ENCODE measurements at regions of chr6 and their contacts with region 1.

Region 1: DNA sequence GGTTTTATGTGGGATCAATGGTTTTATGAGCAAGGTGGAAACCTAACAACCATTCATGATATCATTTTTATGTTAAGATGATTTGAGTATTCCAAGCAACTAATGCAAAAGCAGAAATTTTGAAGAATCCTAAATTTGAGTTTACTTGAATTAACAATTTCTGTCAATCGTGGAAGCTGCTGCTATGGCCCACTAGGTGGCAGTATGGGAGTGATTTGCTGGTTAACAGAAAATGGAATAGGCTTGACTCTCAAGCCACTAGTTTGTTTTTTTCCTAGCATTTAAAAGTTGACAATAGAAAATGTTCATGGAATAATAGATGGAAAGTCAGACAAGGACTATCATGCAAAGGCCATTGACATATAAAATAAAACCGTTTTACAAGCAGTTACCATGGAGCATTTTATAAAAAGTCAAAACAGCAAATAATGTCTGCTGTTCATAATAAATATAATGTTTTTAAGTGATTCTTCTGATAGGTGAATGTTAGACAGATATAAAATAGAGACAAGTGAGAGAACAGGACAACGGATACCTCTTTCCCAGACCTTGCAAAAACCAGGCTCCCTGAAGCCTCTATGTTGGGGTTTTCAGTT is 43.0 kb upstream of the TMEM200A start:
- DNase-seq: peak; percentile 9 to 62 (median 30)
- ATAC-seq: peak; percentile 80
- H3K4me3 ChIP-seq: no peak overlapping the region
- H3K27ac ChIP-seq: no peak overlapping the region
- H3K4me1 ChIP-seq: no peaks in the 10 kb centered on the region
- H3K27me3 ChIP-seq: no peaks in the 10 kb centered on the region
- CTCF ChIP-seq: peak; percentile 62 to 85 (median 77)
- EP300 ChIP-seq: no peak
- POLR2A ChIP-seq: no peak
- RAD21 ChIP-seq: peak; percentile 89

Region 2: DNA sequence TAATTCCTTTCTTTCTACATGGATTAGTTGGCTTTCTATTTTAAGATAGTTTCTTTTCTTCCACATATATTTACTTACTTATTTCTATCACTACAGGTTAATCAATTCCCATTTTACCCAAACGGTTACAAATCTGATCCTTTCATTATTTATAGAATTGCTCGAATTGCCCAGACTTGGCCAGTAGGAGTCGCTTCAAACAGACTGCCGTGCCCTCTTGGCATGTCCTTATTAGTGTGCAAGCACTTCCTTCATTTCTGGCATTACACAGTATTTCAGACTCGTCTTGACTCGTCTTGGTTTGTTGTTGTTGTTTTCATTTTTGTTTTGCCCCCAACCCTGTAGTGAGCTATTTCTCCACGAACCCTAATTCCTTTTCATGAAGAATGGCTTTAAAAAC is 174.6 kb before region 1 on chr6:
- CTCF ChIA-PET with region 1: no interaction called
- POLR2A ChIA-PET with region 1: no interaction called
- in situ Hi-C with region 1: no loop called
- intact Hi-C with region 1: no loop called
- DNase-seq: peak in 2 of 4 experiments; percentile 15 to 20
- ATAC-seq: peak; percentile 77; the same call in 2 of the 3 replicates
- H3K4me3 ChIP-seq: no peak overlapping the region
- H3K27ac ChIP-seq: no peak overlapping the region
- H3K4me1 ChIP-seq: no peaks in the 10 kb centered on the region; a peak in 1 of 5 replicates
- H3K27me3 ChIP-seq: no peaks in the 10 kb centered on the region; a peak in 1 of 5 replicates
- CTCF ChIP-seq: peak; percentile 48 to 60 (median 59)
- EP300 ChIP-seq: no peak
- POLR2A ChIP-seq: no peak
- RAD21 ChIP-seq: peak; percentile 24 to 50; a peak in 3 of 4 replicates

Region 3: DNA sequence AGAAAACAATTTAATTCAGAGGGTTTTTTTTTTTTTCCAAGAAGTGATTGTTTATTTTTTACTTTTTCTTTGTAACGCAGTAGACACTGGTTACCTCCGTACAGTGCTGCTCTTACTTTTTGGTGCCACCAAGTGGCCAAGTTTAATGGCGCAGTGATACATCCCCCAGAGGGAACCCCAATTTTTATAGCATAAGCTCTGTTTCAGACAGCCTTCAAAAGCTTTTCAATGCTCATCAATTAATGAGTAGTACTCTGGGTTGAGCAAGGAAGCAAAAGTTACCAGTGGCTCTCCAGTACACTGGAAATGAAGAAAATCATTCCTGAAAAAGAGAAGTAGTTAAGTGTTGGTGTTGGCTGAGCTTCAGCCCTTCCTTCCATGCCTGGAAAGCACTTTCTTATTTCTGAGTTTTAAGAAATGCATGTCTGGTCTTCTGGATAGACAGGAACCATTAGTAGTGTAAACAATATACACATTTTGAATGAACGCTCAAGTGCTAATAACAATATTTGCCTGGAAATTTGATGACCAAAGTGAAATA is 375.3 kb after region 1 on chr6:
- CTCF ChIA-PET with region 1: interaction called, 7 read pairs
- POLR2A ChIA-PET with region 1: no interaction called
- in situ Hi-C with region 1: no loop called
- intact Hi-C with region 1: loop called (anchors 2 kb)
- DNase-seq: peak; percentile 17 to 36 (median 26)
- ATAC-seq: peak; percentile 84
- H3K4me3 ChIP-seq: no peak overlapping the region
- H3K27ac ChIP-seq: no peak overlapping the region
- H3K4me1 ChIP-seq: no peaks in the 10 kb centered on the region
- H3K27me3 ChIP-seq: no peaks in the 10 kb centered on the region
- CTCF ChIP-seq: peak; percentile 35 to 57 (median 38); a peak in 3 of 6 replicates
- EP300 ChIP-seq: no peak
- POLR2A ChIP-seq: no peak
- RAD21 ChIP-seq: peak; percentile 60 to 69

Region 4: DNA sequence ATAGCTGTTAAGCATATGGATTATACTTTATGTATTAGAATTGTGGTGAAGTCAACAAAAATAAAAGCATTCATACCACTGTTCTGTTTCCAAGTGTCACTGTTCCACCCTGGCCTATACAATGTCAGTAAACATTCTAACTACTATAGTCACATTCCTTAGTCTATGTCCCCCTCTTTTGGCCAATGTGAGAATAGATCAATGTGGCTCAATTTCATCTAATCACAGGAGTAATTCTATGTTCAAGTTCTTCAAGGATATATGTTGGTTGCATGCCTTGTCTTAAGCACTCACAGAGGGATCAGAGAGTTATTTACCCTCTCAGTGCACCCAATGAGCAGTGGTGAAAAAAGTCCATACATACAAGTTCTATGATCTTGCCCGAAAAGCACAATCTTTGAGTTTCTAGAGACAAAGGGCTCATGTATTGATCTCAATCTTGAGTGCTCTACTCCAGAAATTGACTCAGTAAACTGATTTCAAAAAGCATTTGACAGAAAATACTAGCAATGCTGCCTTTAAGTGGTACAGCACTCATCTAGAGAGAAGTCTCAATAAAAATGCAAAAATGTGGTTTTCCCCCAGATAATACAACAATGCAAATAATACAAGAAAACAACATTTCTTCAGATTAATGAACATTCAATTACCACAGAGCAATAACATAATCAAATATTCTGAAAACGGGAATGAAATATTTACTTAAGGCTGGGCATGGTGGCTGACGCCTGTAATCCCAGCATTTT is 521.0 kb after region 1 on chr6:
- CTCF ChIA-PET with region 1: no interaction called
- POLR2A ChIA-PET with region 1: no interaction called
- in situ Hi-C with region 1: no loop called
- intact Hi-C with region 1: loop called (anchors 2 kb)
- DNase-seq: peak in 2 of 4 experiments; percentile 32 to 38
- ATAC-seq: peak; percentile 85
- H3K4me3 ChIP-seq: no peak overlapping the region
- H3K27ac ChIP-seq: no peak overlapping the region
- H3K4me1 ChIP-seq: no peaks in the 10 kb centered on the region
- H3K27me3 ChIP-seq: no peaks in the 10 kb centered on the region
- CTCF ChIP-seq: peak; percentile 41 to 65 (median 59); a peak in 5 of 6 replicates
- EP300 ChIP-seq: no peak
- POLR2A ChIP-seq: no peak
- RAD21 ChIP-seq: peak; percentile 70 to 77

Region 5: DNA sequence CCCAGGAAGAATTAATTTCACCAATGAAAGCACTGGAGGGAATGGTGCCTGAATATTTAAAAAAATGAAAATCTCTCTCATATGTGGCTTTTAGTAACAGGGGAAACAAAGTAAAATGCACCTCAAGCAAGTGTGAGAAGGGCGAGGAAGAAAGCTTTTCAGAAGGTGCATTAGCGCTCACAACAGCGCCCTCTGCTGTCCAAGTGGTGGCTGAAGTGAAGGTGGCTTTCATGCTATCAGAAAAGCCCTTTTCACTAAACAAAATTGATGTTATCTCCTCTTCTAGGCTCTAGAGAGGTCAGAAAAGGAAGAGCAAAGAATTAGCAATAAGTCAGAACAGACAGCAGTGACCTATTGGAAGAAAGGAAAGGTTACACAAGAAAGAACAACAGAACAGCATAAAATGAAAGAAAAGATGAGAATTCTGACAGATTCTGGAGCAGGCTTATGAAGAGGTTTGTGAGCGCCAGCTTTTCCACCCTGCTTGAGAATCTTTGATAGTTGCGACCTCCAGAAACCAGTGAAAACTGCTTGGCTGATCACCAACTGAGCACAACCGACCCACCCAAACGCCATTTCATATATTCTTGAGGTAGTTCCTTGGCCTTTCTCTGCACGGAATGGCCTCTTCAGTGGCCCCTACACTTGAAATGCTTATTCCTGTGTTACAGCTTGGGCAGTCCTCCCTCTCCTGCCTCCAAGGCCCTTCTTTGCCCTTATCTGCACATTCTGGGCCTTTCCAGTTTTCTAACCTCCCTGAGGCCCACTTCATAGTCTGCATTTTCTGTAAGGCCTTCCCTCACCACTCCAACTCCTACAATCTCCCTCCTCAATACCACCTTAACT is 549.7 kb after region 1 on chr6:
- CTCF ChIA-PET with region 1: interaction called, 6 read pairs
- POLR2A ChIA-PET with region 1: no interaction called
- in situ Hi-C with region 1: no loop called
- intact Hi-C with region 1: loop called (anchors 2 kb)
- DNase-seq: peak; percentile 52 to 75 (median 62)
- ATAC-seq: peak; percentile 91
- H3K4me3 ChIP-seq: no peak overlapping the region
- H3K27ac ChIP-seq: no peak overlapping the region
- H3K4me1 ChIP-seq: no peaks in the 10 kb centered on the region
- H3K27me3 ChIP-seq: no peaks in the 10 kb centered on the region
- CTCF ChIP-seq: peak; percentile 65 to 79 (median 78)
- EP300 ChIP-seq: no peak
- POLR2A ChIP-seq: no peak
- RAD21 ChIP-seq: peak; percentile 42 to 62; a peak in 3 of 4 replicates

Region 6: DNA sequence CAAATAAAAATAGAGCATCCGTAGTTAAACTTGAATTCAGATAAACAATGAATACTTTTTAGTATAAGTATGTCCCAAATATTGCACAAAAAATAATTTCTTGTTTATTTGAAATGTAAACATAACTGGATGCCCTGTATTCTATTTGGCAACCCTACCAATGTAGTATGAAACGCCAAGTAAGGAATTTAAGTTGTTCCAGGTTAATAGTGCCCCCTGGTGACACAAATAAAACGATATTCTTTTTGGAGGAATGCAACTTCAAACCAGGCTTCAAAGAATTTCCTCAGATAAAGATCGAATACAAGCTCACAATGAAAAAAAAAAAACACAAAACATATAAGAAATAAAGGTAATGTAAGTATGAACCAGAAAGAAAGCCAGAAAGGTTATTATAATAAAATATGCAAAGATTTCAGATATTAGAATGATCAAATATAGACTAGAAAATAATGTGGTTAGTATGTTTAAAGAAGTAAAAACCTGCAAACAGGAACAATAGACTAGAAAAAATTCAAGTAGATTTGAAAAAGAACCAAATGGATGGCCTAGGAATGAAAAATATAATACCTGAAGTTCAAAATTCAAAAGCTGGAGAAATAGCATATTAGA is 794.1 kb after region 1 on chr6:
- CTCF ChIA-PET with region 1: no interaction called
- POLR2A ChIA-PET with region 1: no interaction called
- in situ Hi-C with region 1: no loop called
- intact Hi-C with region 1: loop called (anchors 10 kb)
- DNase-seq: peak; percentile 22 to 55 (median 40)
- ATAC-seq: peak; percentile 82
- H3K4me3 ChIP-seq: no peak overlapping the region
- H3K27ac ChIP-seq: no peak overlapping the region
- H3K4me1 ChIP-seq: no peaks in the 10 kb centered on the region
- H3K27me3 ChIP-seq: no peaks in the 10 kb centered on the region
- CTCF ChIP-seq: peak; percentile 37 to 63 (median 42); a peak in 4 of 6 replicates
- EP300 ChIP-seq: no peak
- POLR2A ChIP-seq: no peak
- RAD21 ChIP-seq: peak; percentile 83 to 86

Measured in K562 (cell line).